CD8-positive, alpha-beta T cell (primary cell): ENCODE measurements at regions of chr13 and their contacts with region 1.

Region 1: GRCh38 chr13:24922745-24923591 is 159.0 kb downstream of the RNF17 start:
- DNase-seq: peak; percentile 85 to 96 (median 94)
- ATAC-seq: peak; percentile 99
- H3K4me3 ChIP-seq: peak overlapping the region; percentile 82 to 95
- H3K4me3 Mint-ChIP-seq: peak overlapping the region; percentile 96
- H3K27ac ChIP-seq: peak overlapping the region; percentile 70 to 94
- H3K27ac Mint-ChIP-seq: peak overlapping the region; percentile 92
- H3K4me1 ChIP-seq: peaks cover 9% of the 10 kb centered on the region
- H3K4me1 Mint-ChIP-seq: peaks cover 15% of the 10 kb centered on the region
- H3K27me3 ChIP-seq: no peaks in the 10 kb centered on the region
- H3K27me3 Mint-ChIP-seq: no peaks in the 10 kb centered on the region
- CTCF ChIP-seq: no peak

Region 2: GRCh38 chr13:24160454-24161009 is 762.4 kb before region 1 on chr13 and contains the start of gene SPATA13:
- CTCF ChIA-PET with region 1: no interaction called
- POLR2A ChIA-PET with region 1: no interaction called
- intact Hi-C with region 1: loop called in 1 of 2 experiments (anchors 2 kb)
- DNase-seq: peak; percentile 87 to 97 (median 94)
- ATAC-seq: peak; percentile 96
- H3K4me3 ChIP-seq: peak within 1 kb of the TSS; percentile 87 to 89
- H3K4me3 Mint-ChIP-seq: peak within 1 kb of the TSS; percentile 87
- H3K27ac ChIP-seq: peak within 1 kb of the TSS; percentile 29 to 56
- H3K27ac Mint-ChIP-seq: peak within 1 kb of the TSS; percentile 72
- H3K4me1 ChIP-seq: peaks cover 16% of the 10 kb centered on the region
- H3K4me1 Mint-ChIP-seq: peaks cover 26% of the 10 kb centered on the region
- H3K27me3 ChIP-seq: no peaks in the 10 kb centered on the region
- H3K27me3 Mint-ChIP-seq: no peaks in the 10 kb centered on the region
- CTCF ChIP-seq: no peak
- total RNA-seq, gene SPATA13: 102 to 106 TPM

Region 3: DNA sequence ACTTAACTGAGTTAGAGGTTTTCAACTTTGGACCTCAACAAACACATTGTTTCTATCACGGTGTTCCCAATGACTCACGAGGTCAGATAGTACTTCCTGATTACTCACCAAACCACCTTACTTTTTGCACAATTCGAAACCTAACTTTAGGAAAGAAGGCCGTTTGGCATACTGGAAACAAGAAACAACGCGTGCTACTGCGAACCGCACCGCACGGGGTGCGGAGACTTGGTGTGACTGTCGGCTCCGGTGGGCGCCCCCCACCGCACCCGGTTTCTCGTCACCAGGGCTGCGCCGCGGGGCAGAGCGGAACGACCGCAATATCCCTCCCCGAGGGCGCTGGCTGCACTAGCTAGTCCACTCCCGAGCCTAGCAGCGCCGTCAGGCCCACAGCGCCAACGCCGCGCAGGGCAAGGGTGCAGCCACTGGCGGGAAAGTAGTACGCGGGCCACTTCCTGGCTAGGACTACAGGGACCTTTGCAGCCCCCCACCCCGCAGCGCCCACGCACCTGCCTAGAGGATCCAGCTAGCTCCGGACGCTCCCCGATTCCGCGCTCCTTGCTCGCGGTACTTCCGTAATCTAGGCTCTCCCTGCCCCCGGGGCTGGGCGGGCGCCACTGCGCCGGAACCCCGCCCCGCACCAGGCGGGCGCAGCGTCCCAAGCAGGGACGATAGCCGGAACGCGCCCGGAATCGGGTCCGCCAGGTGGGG is 410.6 kb before region 1 on chr13 and contains the start of gene PARP4:
- CTCF ChIA-PET with region 1: no interaction called
- POLR2A ChIA-PET with region 1: no interaction called
- intact Hi-C with region 1: loop called in 1 of 2 experiments (anchors 10 kb)
- DNase-seq: peak in 8 of 9 experiments; percentile 53 to 84 (median 66)
- ATAC-seq: peak; percentile 71
- H3K4me3 ChIP-seq: peak within 1 kb of the TSS; percentile 70 to 98
- H3K4me3 Mint-ChIP-seq: peak within 1 kb of the TSS; percentile 87
- H3K27ac ChIP-seq: peak within 1 kb of the TSS; percentile 66 to 83
- H3K27ac Mint-ChIP-seq: peak within 1 kb of the TSS; percentile 92
- H3K4me1 ChIP-seq: peaks cover 12% of the 10 kb centered on the region
- H3K4me1 Mint-ChIP-seq: peaks cover 31% of the 10 kb centered on the region
- H3K27me3 ChIP-seq: no peaks in the 10 kb centered on the region
- H3K27me3 Mint-ChIP-seq: no peaks in the 10 kb centered on the region
- CTCF ChIP-seq: no peak
- total RNA-seq, gene PARP4: 20.1 to 21.8 TPM

Region 4: GRCh38 chr13:24822640-24823039 is 100.3 kb before region 1 on chr13:
- CTCF ChIA-PET with region 1: no interaction called
- POLR2A ChIA-PET with region 1: no interaction called
- intact Hi-C with region 1: no loop called
- DNase-seq: no peak
- ATAC-seq: no peak
- H3K4me3 ChIP-seq: no peak overlapping the region
- H3K4me3 Mint-ChIP-seq: no peak overlapping the region
- H3K27ac ChIP-seq: no peak overlapping the region
- H3K27ac Mint-ChIP-seq: no peak overlapping the region
- H3K4me1 ChIP-seq: no peaks in the 10 kb centered on the region
- H3K4me1 Mint-ChIP-seq: no peaks in the 10 kb centered on the region
- H3K27me3 ChIP-seq: no peaks in the 10 kb centered on the region
- H3K27me3 Mint-ChIP-seq: peaks cover 22% of the 10 kb centered on the region
- CTCF ChIP-seq: no peak

Region 5: GRCh38 chr13:26221721-26222519 is 1299.0 kb after region 1 on chr13 and contains the start of gene RNF6:
- CTCF ChIA-PET with region 1: no interaction called
- POLR2A ChIA-PET with region 1: no interaction called
- intact Hi-C with region 1: loop called in 1 of 2 experiments (anchors 10 kb)
- DNase-seq: peak; percentile 73 to 97 (median 86)
- ATAC-seq: peak; percentile 92
- H3K4me3 ChIP-seq: peak within 1 kb of the TSS; percentile 97 to 99
- H3K4me3 Mint-ChIP-seq: peak within 1 kb of the TSS; percentile 99
- H3K27ac ChIP-seq: peak within 1 kb of the TSS; percentile 90 to 98
- H3K27ac Mint-ChIP-seq: peak within 1 kb of the TSS; percentile 100
- H3K4me1 ChIP-seq: peaks cover 26% of the 10 kb centered on the region
- H3K4me1 Mint-ChIP-seq: peaks cover 45% of the 10 kb centered on the region
- H3K27me3 ChIP-seq: no peaks in the 10 kb centered on the region
- H3K27me3 Mint-ChIP-seq: no peaks in the 10 kb centered on the region
- CTCF ChIP-seq: no peak
- total RNA-seq, gene RNF6: 50.3 to 55.0 TPM